CD8-positive, alpha-beta T cell (primary cell): ENCODE measurements at regions of chr12 and their contacts with region 1.

Region 1: GRCh38 chr12:48197971-48198671 is 5.0 kb downstream of the OR10AD1 start:
- DNase-seq: peak; percentile 75 to 95 (median 88)
- ATAC-seq: peak; percentile 88
- H3K4me3 ChIP-seq: peak overlapping the region; percentile 71 to 90
- H3K4me3 Mint-ChIP-seq: peak overlapping the region; percentile 88
- H3K27ac ChIP-seq: peak overlapping the region; percentile 97
- H3K27ac Mint-ChIP-seq: peak overlapping the region; percentile 93
- H3K4me1 ChIP-seq: peaks cover 20% of the 10 kb centered on the region
- H3K4me1 Mint-ChIP-seq: peaks cover 51% of the 10 kb centered on the region
- H3K27me3 ChIP-seq: no peaks in the 10 kb centered on the region
- H3K27me3 Mint-ChIP-seq: peaks cover 4% of the 10 kb centered on the region
- CTCF ChIP-seq: no peak

Region 2: GRCh38 chr12:47223848-47224213 is 974.3 kb before region 1 on chr12:
- CTCF ChIA-PET with region 1: no interaction called
- POLR2A ChIA-PET with region 1: no interaction called
- intact Hi-C with region 1: no loop called
- DNase-seq: no peak
- ATAC-seq: no peak
- H3K4me3 ChIP-seq: peak overlapping the region; percentile 16 to 31
- H3K4me3 Mint-ChIP-seq: peak overlapping the region; percentile 83
- H3K27ac ChIP-seq: peak overlapping the region in 1 of 2 experiments; percentile 64
- H3K27ac Mint-ChIP-seq: peak overlapping the region; percentile 97
- H3K4me1 ChIP-seq: peaks cover 58% of the 10 kb centered on the region
- H3K4me1 Mint-ChIP-seq: peaks cover 83% of the 10 kb centered on the region
- H3K27me3 ChIP-seq: no peaks in the 10 kb centered on the region
- H3K27me3 Mint-ChIP-seq: no peaks in the 10 kb centered on the region
- CTCF ChIP-seq: no peak

Region 3: GRCh38 chr12:48157018-48157888 is 40.9 kb before region 1 on chr12 and contains the start of gene ASB8:
- CTCF ChIA-PET with region 1: interaction called, 4 read pairs
- POLR2A ChIA-PET with region 1: interaction called, 11 read pairs
- intact Hi-C with region 1: loop called (anchors 1 to 5 kb)
- DNase-seq: peak; percentile 98 to 99 (median 99)
- ATAC-seq: peak; percentile 95
- H3K4me3 ChIP-seq: peak within 1 kb of the TSS; percentile 92 to 97
- H3K4me3 Mint-ChIP-seq: peak within 1 kb of the TSS; percentile 98
- H3K27ac ChIP-seq: peak within 1 kb of the TSS; percentile 83 to 87
- H3K27ac Mint-ChIP-seq: peak within 1 kb of the TSS; percentile 99
- H3K4me1 ChIP-seq: peaks cover 15% of the 10 kb centered on the region
- H3K4me1 Mint-ChIP-seq: peaks cover 48% of the 10 kb centered on the region
- H3K27me3 ChIP-seq: no peaks in the 10 kb centered on the region
- H3K27me3 Mint-ChIP-seq: no peaks in the 10 kb centered on the region
- CTCF ChIP-seq: peak; percentile 63
- total RNA-seq, gene ASB8: 54.7 to 55.6 TPM

Region 4: DNA sequence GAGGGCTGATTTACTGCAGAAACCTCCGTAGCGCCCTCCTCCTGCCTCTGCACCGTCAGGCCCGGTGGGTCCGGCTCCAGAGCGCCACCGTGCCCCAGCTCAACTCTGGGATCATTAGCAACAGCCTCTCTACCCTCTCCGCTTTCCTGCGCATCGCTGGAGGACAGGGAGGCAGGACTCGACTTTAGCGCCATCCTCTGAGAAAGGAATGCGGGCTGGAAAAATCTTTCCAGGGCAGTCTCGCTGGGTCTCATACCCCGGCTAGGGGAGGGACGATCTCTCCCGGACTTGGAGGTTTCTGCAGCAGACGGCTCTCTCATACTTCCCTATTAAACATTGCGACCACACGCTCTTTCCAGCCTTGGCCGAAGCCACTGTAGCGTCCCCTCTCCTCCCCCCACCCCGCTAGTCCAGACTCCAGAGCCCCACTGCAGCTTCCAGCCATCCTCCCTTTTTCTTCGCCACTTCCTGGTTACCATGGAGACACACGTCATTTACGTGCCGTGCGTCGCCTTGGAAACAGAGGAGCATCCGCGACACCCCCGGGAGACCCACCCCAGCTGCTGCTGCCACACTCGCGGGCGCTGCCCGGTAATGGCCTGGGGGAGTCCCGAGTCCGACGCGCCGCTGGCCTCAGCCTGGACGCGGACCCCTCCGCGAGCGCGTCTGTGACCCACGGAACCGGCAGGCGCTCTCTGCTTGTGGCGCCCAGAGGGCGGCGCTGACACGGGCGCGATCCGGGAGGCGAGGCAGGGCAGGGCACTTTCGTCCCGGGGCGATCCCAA is 14.8 kb before region 1 on chr12 and contains the start of gene CCDC184:
- CTCF ChIA-PET with region 1: interaction called, 95 read pairs
- POLR2A ChIA-PET with region 1: interaction called, 24 read pairs
- intact Hi-C with region 1: loop called in 1 of 2 experiments (anchors 1 kb)
- DNase-seq: peak; percentile 48 to 93 (median 74)
- ATAC-seq: peak; percentile 80
- H3K4me3 ChIP-seq: peak within 1 kb of the TSS; percentile 75 to 99
- H3K4me3 Mint-ChIP-seq: peak within 1 kb of the TSS; percentile 93
- H3K27ac ChIP-seq: peak within 1 kb of the TSS; percentile 50 to 85
- H3K27ac Mint-ChIP-seq: peak within 1 kb of the TSS; percentile 43
- H3K4me1 ChIP-seq: peaks cover 14% of the 10 kb centered on the region
- H3K4me1 Mint-ChIP-seq: peaks cover 6% of the 10 kb centered on the region
- H3K27me3 ChIP-seq: peaks cover 6 to 12% of the 10 kb centered on the region in 2 experiments
- H3K27me3 Mint-ChIP-seq: peaks cover 29% of the 10 kb centered on the region
- CTCF ChIP-seq: peak; percentile 54
- total RNA-seq, gene CCDC184: 0.90 to 1.3 TPM

Region 5: GRCh38 chr12:48350249-48351021 is 152.3 kb after region 1 on chr12 and contains the start of gene ZNF641:
- CTCF ChIA-PET with region 1: interaction called, 5 read pairs
- POLR2A ChIA-PET with region 1: no interaction called
- intact Hi-C with region 1: loop called (anchors 1 to 5 kb)
- DNase-seq: peak; percentile 54 to 93 (median 81)
- ATAC-seq: peak; percentile 87
- H3K4me3 ChIP-seq: peak within 1 kb of the TSS; percentile 86 to 88
- H3K4me3 Mint-ChIP-seq: peak within 1 kb of the TSS; percentile 92
- H3K27ac ChIP-seq: peak within 1 kb of the TSS; percentile 71 to 88
- H3K27ac Mint-ChIP-seq: peak within 1 kb of the TSS; percentile 95
- H3K4me1 ChIP-seq: peaks cover 26% of the 10 kb centered on the region
- H3K4me1 Mint-ChIP-seq: peaks cover 44% of the 10 kb centered on the region
- H3K27me3 ChIP-seq: no peaks in the 10 kb centered on the region
- H3K27me3 Mint-ChIP-seq: no peaks in the 10 kb centered on the region
- CTCF ChIP-seq: no peak
- total RNA-seq, gene ZNF641: 12.1 to 12.3 TPM

Region 6: DNA sequence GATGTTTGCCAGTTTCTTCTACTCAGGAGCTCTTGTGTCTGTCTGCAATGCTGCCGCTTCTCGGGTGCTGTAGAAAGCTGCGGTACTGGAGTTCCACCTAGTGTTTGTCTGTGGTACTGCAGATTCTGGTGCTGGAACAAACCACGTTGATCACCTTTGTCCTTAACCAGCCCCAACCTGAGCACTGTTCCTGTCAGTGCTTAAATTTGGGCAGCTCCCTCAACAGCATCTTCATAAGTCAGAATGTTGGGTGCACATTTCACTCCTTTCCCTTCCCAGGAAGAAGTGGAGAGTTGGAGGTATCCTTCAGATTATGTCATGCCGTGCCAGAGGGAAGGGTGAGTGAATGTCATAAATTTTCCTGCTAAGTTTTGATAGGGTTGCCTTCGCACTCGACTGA is 420.4 kb after region 1 on chr12:
- CTCF ChIA-PET with region 1: interaction called, 20 read pairs
- POLR2A ChIA-PET with region 1: interaction called, 3 read pairs
- intact Hi-C with region 1: no loop called
- DNase-seq: peak; percentile 56 to 84 (median 73)
- ATAC-seq: peak; percentile 100
- H3K4me3 ChIP-seq: no peak overlapping the region
- H3K4me3 Mint-ChIP-seq: no peak overlapping the region
- H3K27ac ChIP-seq: no peak overlapping the region
- H3K27ac Mint-ChIP-seq: no peak overlapping the region
- H3K4me1 ChIP-seq: no peaks in the 10 kb centered on the region
- H3K4me1 Mint-ChIP-seq: no peaks in the 10 kb centered on the region
- H3K27me3 ChIP-seq: no peaks in the 10 kb centered on the region
- H3K27me3 Mint-ChIP-seq: peaks cover 33% of the 10 kb centered on the region
- CTCF ChIP-seq: peak; percentile 94

Region 7: DNA sequence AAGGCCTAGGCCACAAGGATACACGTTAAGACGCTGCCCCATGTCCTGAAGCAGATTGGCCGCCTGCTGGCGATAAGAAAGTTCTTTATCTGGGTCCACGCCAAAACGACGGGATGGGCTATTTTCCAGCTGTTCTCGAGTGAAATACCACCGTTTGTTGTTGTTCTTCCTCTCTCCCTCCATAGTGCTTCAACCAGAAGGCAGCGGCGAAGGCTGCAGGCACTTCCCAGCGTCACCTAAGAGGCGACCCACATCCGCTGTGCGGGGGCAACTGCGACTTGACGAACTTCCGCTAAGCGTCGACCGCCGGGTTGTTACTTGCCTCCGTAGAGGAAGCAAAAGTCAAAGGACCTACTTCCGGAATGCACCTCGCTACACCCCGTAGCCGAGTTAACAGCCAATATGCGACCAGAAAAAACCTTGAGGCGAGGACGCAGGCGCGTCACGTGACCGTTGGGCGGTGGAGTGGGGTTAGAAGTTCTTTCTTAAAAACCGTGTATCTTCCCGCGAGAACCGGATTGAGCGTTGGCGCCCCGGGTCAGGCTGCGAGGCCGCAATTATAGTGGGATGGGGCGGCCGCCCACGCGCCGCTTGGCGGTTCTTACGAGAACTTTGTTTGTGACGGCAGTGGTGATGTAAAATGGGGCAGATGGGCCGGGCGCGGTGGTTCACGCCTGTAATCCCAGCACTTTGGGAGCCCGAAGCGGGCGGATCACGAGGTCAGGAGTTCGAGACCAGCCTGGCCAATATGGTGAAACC is 518.6 kb after region 1 on chr12 and contains the start of gene CCNT1:
- CTCF ChIA-PET with region 1: no interaction called
- POLR2A ChIA-PET with region 1: no interaction called
- intact Hi-C with region 1: loop called in 1 of 2 experiments (anchors 2 kb)
- DNase-seq: peak; percentile 96 to 100 (median 97)
- ATAC-seq: peak; percentile 86
- H3K4me3 ChIP-seq: peak within 1 kb of the TSS; percentile 84
- H3K4me3 Mint-ChIP-seq: peak within 1 kb of the TSS; percentile 92
- H3K27ac ChIP-seq: peak within 1 kb of the TSS; percentile 96 to 99
- H3K27ac Mint-ChIP-seq: peak within 1 kb of the TSS; percentile 98
- H3K4me1 ChIP-seq: peaks cover 30% of the 10 kb centered on the region
- H3K4me1 Mint-ChIP-seq: peaks cover 40% of the 10 kb centered on the region
- H3K27me3 ChIP-seq: no peaks in the 10 kb centered on the region
- H3K27me3 Mint-ChIP-seq: no peaks in the 10 kb centered on the region
- CTCF ChIP-seq: no peak
- total RNA-seq, gene CCNT1: 127 to 132 TPM